Ascending aorta (tissue), 2 donors: ENCODE measurements at regions of chr10 and their contacts with region 1.

Region 1: GRCh38 chr10:70233109-70233938 is at the start of gene PPA1:
- DNase-seq: peak; percentile 95 to 99
- H3K4me3 ChIP-seq: peak within 1 kb of the TSS; percentile 84 to 95
- H3K27ac ChIP-seq: peak within 1 kb of the TSS; percentile 68 to 72
- H3K4me1 ChIP-seq: peaks cover 0 to 8% of the 10 kb centered on the region in 2 donors
- H3K27me3 ChIP-seq: no peaks in the 10 kb centered on the region
- CTCF ChIP-seq: peak; percentile 12 to 21 (median 15)
- total RNA-seq, gene PPA1: 66.4 TPM

Region 2: DNA sequence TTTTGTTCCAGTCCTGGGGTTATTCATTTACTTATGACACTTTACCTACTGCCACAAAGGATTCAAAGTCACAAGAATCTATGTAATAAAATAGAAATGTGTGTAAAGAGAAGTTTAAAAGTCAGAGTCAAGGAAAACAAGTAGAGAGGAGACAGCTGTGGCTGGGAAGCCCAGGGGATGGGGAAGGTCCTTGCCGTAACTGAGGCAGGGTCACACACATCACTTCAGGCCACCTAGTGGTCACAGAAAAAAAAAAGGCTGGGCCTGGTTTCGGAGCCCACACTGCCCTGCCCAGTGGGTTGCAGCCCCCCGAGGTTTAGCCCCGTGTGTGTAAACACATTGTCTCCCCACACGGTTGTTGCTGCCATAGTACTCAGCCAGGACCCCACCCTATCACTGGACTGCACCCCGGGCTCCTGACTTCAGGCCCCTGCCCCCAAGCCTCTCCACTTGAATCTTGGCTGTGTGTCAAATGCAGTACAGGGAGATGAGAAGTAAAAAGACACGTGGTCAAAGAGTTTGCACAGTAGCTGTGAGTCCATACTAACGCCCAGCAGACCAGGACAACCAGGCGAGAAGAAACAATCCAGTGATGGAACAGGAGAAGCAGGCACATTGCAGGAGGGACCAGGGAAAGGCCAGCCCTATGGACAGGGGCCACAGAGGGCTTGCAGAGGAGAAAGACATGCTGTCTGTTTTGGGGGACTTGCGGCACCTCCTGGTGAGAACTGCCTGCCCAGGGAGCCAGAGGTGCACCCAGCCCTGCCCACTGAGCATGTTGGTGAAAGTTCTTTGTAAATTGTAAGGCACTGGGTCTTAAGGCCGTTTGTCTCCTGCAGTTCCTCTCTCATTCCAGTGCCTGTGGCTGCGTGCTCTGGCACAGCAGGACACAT is 272.1 kb before region 1 on chr10:
- intact Hi-C with region 1: no loop called
- DNase-seq: no peak
- H3K4me3 ChIP-seq: no peak overlapping the region
- H3K27ac ChIP-seq: no peak overlapping the region
- H3K4me1 ChIP-seq: no peaks in the 10 kb centered on the region
- H3K27me3 ChIP-seq: no peaks in the 10 kb centered on the region
- CTCF ChIP-seq: peak in 1 of 3 experiments; percentile 10

Region 3: GRCh38 chr10:70074165-70074564 is 159.2 kb before region 1 on chr10:
- intact Hi-C with region 1: no loop called
- DNase-seq: no peak
- H3K4me3 ChIP-seq: no peak overlapping the region
- H3K27ac ChIP-seq: no peak overlapping the region
- H3K4me1 ChIP-seq: no peaks in the 10 kb centered on the region
- H3K27me3 ChIP-seq: no peaks in the 10 kb centered on the region
- CTCF ChIP-seq: no peak

Region 4: DNA sequence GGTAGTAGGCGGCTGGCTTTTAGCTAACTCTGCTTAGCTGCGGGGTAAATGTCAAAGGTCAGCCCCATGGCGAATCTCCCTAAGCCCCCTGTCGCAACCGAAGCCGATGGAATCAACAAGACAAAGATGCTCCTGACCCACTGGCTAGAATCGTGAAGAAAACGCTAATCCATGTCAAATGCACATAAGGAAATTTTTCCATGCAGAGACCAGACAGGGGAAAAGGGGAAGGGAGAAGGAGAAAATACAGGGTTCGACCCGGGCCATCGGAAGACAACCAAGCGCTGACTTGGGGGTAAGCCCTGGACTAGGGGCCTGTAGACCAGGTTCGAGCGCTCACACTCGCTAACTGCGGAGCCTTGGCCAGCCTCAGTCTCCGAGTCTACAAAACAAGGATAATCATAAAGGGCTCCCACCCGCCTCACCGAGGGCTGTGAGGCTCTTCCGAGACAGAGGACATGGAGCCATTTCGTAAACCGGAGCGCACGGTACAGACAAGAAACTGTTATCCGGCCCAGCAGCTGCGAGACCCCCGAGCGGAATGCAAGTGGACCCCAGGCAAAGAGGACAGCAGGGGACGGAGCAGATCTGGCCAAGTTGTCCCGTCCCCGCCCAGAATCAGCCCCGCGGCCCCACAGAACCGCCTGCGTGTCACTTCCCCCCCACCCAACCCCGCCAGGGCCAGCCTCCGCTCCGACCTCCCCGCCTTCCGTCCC is 63.5 kb before region 1 on chr10:
- intact Hi-C with region 1: loop called (anchors 1 kb)
- DNase-seq: no peak
- H3K4me3 ChIP-seq: peak overlapping the region; percentile 61 to 74
- H3K27ac ChIP-seq: peak overlapping the region; percentile 87 to 88
- H3K4me1 ChIP-seq: peaks cover 3 to 15% of the 10 kb centered on the region in 2 donors
- H3K27me3 ChIP-seq: no peaks in the 10 kb centered on the region
- CTCF ChIP-seq: no peak

Region 5: GRCh38 chr10:70296406-70296899 is 63.1 kb after region 1 on chr10:
- intact Hi-C with region 1: loop called (anchors 1 kb)
- DNase-seq: peak; percentile 55 to 93
- H3K4me3 ChIP-seq: no peak overlapping the region
- H3K27ac ChIP-seq: peak overlapping the region; percentile 76 to 77
- H3K4me1 ChIP-seq: peaks cover 4 to 9% of the 10 kb centered on the region in 2 donors
- H3K27me3 ChIP-seq: no peaks in the 10 kb centered on the region
- CTCF ChIP-seq: no peak

Region 6: GRCh38 chr10:70381471-70382421 is 148.4 kb after region 1 on chr10:
- intact Hi-C with region 1: loop called (anchors 1 kb)
- DNase-seq: peak in 1 of 2 donors; percentile 73
- H3K4me3 ChIP-seq: peak overlapping the region; percentile 70 to 86
- H3K27ac ChIP-seq: peak overlapping the region; percentile 16 to 56
- H3K4me1 ChIP-seq: peaks cover 0 to 7% of the 10 kb centered on the region in 2 donors
- H3K27me3 ChIP-seq: no peaks in the 10 kb centered on the region
- CTCF ChIP-seq: no peak